Heart right ventricle (tissue), 16 donors: ENCODE measurements at regions of chr20 and their contacts with region 1.

Region 1: DNA sequence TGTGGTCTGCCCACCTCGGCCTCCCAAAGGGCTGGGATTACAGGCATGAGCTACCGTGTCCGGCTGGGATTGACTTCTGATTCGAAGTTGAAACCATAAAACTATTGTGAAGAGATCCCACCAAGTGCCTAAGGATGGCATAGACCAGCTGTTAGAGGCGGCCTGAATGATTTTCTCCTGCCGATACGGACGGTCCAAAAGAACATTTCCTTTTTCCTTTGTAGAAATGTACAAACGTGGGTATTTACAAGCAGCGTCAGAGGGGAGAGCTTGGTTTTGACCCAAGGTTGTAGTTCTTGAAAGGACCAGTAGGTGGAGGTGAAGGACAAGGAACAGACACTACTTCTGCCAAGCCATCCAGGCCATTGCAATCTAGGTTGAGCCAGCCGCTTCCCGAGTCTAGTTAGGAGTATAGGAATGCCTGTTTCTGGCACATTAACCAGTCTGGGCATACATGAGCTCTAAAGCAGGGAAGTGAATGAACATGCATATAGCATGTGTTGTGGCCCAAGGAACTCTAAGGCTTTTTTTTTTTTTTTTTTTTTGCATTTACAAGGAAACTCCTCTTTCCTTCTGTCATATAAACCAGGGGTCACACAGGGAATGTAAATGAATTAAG is 29.1 kb downstream of the MOCS3 start:
- DNase-seq: peak; percentile 18 to 74
- ATAC-seq: peak; percentile 83 to 92 (median 88)
- H3K4me3 ChIP-seq: no peak overlapping the region
- H3K27ac ChIP-seq: no peak overlapping the region
- H3K4me1 ChIP-seq: no peaks in the 10 kb centered on the region
- H3K27me3 ChIP-seq: peaks cover 0 to 71% (median 55%) of the 10 kb centered on the region in 7 donors
- CTCF ChIP-seq: peak; percentile 76 to 90 (median 86)

Region 2: DNA sequence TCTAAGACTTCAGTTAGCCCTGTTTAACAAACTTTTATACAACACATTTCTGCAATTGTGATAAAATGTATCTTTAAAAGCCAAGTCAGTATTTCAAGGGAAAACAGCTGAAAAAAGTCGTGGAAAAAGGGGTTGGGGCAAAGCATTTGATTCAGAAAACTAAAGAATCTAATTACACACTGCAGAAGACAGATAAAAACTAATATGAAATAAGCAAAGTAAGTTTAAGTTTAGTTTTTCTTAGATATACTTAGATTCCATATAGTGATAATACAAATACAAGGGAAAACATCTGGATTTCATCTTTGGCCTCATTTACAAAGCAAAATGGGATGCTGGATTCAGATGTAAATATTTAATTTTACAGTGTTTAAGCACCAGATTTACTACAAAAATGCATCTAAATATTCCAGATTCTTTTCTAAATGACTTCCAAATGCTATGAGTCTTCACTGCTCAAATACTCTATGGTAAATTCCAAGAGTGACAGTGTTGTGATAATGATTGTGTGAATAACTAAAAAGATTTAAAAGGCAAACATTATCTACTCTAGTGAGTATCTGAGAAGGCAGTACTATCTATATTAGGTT is 54.9 kb before region 1 on chr20:
- intact Hi-C with region 1: no loop called
- DNase-seq: no peak
- ATAC-seq: no peak
- H3K4me3 ChIP-seq: no peak overlapping the region
- H3K27ac ChIP-seq: peak overlapping the region in 2 of 10 donors; percentile 98 to 100
- H3K4me1 ChIP-seq: peaks cover 0 to 29% (median 21%) of the 10 kb centered on the region in 9 donors
- H3K27me3 ChIP-seq: no peaks in the 10 kb centered on the region
- CTCF ChIP-seq: no peak

Region 3: GRCh38 chr20:50958615-50959542 is 28.8 kb before region 1 on chr20 and contains the start of gene MOCS3:
- intact Hi-C with region 1: no loop called
- DNase-seq: peak; percentile 72 to 90
- ATAC-seq: peak; percentile 84 to 93 (median 88)
- H3K4me3 ChIP-seq: peak within 1 kb of the TSS; percentile 77 to 100 (median 90)
- H3K27ac ChIP-seq: peak within 1 kb of the TSS; percentile 83 to 97 (median 93)
- H3K4me1 ChIP-seq: peaks cover 9 to 60% (median 45%) of the 10 kb centered on the region in 9 donors
- H3K27me3 ChIP-seq: no peaks in the 10 kb centered on the region
- CTCF ChIP-seq: peak in 2 of 9 donors; percentile 8 to 19
- total RNA-seq, gene MOCS3: 2.3 to 3.2 (median 2.6) TPM

Region 4: GRCh38 chr20:51306503-51307358 is 319.0 kb after region 1 on chr20:
- intact Hi-C with region 1: loop called (anchors 1 to 5 kb)
- DNase-seq: peak; percentile 64 to 73
- ATAC-seq: peak; percentile 90 to 96 (median 93)
- H3K4me3 ChIP-seq: no peak overlapping the region
- H3K27ac ChIP-seq: no peak overlapping the region
- H3K4me1 ChIP-seq: peaks cover 0 to 8% (median 0%) of the 10 kb centered on the region in 9 donors
- H3K27me3 ChIP-seq: peaks cover 0 to 15% (median 0%) of the 10 kb centered on the region in 7 donors
- CTCF ChIP-seq: peak; percentile 84 to 96 (median 94)

Region 5: GRCh38 chr20:51326201-51326819 is 338.6 kb after region 1 on chr20:
- intact Hi-C with region 1: loop called in 2 of 10 experiments (anchors 5 kb)
- DNase-seq: no peak
- ATAC-seq: peak in 1 of 8 donors; percentile 44
- H3K4me3 ChIP-seq: no peak overlapping the region
- H3K27ac ChIP-seq: no peak overlapping the region
- H3K4me1 ChIP-seq: no peaks in the 10 kb centered on the region
- H3K27me3 ChIP-seq: peaks cover 0 to 26% (median 6%) of the 10 kb centered on the region in 7 donors
- CTCF ChIP-seq: peak in 8 of 9 donors; percentile 21 to 80 (median 48)

Region 6: GRCh38 chr20:51595058-51595532 is 607.4 kb after region 1 on chr20:
- intact Hi-C with region 1: loop called in 6 of 10 experiments (anchors 10 kb)
- DNase-seq: peak; percentile 83 to 90
- ATAC-seq: peak; percentile 93 to 99 (median 98)
- H3K4me3 ChIP-seq: no peak overlapping the region
- H3K27ac ChIP-seq: peak overlapping the region in 1 of 10 donors; percentile 20
- H3K4me1 ChIP-seq: peaks cover 0 to 15% (median 9%) of the 10 kb centered on the region in 9 donors
- H3K27me3 ChIP-seq: no peaks in the 10 kb centered on the region
- CTCF ChIP-seq: peak; percentile 71 to 93 (median 90)

Region 7: GRCh38 chr20:51624157-51624731 is 636.5 kb after region 1 on chr20:
- intact Hi-C with region 1: loop called in 1 of 10 experiments (anchors 10 kb)
- DNase-seq: peak; percentile 41 to 51
- ATAC-seq: peak in 6 of 8 donors; percentile 33 to 50 (median 44)
- H3K4me3 ChIP-seq: no peak overlapping the region
- H3K27ac ChIP-seq: no peak overlapping the region
- H3K4me1 ChIP-seq: peaks cover 0 to 10% (median 3%) of the 10 kb centered on the region in 9 donors
- H3K27me3 ChIP-seq: no peaks in the 10 kb centered on the region
- CTCF ChIP-seq: peak; percentile 21 to 68 (median 64)

Region 8: GRCh38 chr20:51639206-51639832 is 651.6 kb after region 1 on chr20:
- intact Hi-C with region 1: loop called in 1 of 10 experiments (anchors 10 kb)
- DNase-seq: peak; percentile 65 to 69
- ATAC-seq: peak; percentile 64 to 83 (median 78)
- H3K4me3 ChIP-seq: no peak overlapping the region
- H3K27ac ChIP-seq: no peak overlapping the region
- H3K4me1 ChIP-seq: peaks cover 0 to 9% (median 0%) of the 10 kb centered on the region in 9 donors
- H3K27me3 ChIP-seq: no peaks in the 10 kb centered on the region
- CTCF ChIP-seq: peak; percentile 66 to 89 (median 85)

Region 9: DNA sequence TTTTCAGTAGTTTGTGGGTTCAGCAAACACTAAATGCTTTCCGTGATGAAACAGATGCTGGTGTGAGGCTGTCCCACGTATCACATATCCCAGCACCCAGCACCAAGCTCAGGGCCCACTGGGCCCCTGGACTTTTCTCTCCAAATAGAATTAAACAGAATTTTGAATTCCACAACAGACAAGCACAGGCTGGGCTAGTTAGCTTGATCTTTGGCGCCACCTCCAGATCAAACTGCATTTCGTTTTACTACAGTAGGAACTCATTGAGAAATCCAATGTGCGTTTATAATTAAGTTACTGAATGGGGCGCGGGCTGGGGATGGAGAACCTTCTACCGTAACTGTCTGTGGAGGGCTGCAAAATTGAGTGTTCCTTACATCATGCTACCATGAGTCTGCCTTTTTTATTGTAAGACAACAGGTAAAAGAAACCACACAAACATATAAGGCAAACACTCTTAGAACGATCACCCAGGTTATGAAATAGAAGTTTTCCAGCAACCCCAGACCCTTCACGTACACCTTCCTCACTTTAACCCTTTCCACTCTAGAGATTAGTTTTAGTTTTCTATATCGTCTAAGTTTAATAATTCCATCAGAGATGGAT is 1096.0 kb after region 1 on chr20:
- intact Hi-C with region 1: loop called in 1 of 10 experiments (anchors 5 kb)
- DNase-seq: peak in 1 of 2 donors; percentile 48
- ATAC-seq: peak in 6 of 8 donors; percentile 19 to 67 (median 54)
- H3K4me3 ChIP-seq: no peak overlapping the region
- H3K27ac ChIP-seq: no peak overlapping the region
- H3K4me1 ChIP-seq: no peaks in the 10 kb centered on the region
- H3K27me3 ChIP-seq: no peaks in the 10 kb centered on the region
- CTCF ChIP-seq: peak; percentile 13 to 72 (median 59)

Region 10: GRCh38 chr20:52150440-52151258 is 1162.9 kb after region 1 on chr20:
- intact Hi-C with region 1: no loop called
- DNase-seq: peak in 1 of 2 donors; percentile 12
- ATAC-seq: peak in 1 of 8 donors; percentile 49
- H3K4me3 ChIP-seq: no peak overlapping the region
- H3K27ac ChIP-seq: no peak overlapping the region
- H3K4me1 ChIP-seq: no peaks in the 10 kb centered on the region
- H3K27me3 ChIP-seq: no peaks in the 10 kb centered on the region
- CTCF ChIP-seq: peak; percentile 43 to 87 (median 74)